ENCODE measurements at regions of chr17 and their contacts with region 1.

Region 1: GRCh38 chr17:8300627-8301242 is 5.5 kb upstream of the SLC25A35 start:
- DNase-seq: peak; percentile 87 to 94
- ATAC-seq: peak; percentile 95 to 99
- H3K4me3 ChIP-seq: no peak overlapping the region
- H3K27ac ChIP-seq: 0 out of 6 replicates have a peak overlapping the region, but pooled peaks of 1 of the 2 experiments have one; percentile 18
- H3K4me1 ChIP-seq: no peaks in the 10 kb centered on the region
- CTCF ChIP-seq: peak; percentile 94
- EP300 ChIP-seq: no peak
- POLR2A ChIP-seq: no peak
- RAD21 ChIP-seq: peak; percentile 92 to 98

Region 2: DNA sequence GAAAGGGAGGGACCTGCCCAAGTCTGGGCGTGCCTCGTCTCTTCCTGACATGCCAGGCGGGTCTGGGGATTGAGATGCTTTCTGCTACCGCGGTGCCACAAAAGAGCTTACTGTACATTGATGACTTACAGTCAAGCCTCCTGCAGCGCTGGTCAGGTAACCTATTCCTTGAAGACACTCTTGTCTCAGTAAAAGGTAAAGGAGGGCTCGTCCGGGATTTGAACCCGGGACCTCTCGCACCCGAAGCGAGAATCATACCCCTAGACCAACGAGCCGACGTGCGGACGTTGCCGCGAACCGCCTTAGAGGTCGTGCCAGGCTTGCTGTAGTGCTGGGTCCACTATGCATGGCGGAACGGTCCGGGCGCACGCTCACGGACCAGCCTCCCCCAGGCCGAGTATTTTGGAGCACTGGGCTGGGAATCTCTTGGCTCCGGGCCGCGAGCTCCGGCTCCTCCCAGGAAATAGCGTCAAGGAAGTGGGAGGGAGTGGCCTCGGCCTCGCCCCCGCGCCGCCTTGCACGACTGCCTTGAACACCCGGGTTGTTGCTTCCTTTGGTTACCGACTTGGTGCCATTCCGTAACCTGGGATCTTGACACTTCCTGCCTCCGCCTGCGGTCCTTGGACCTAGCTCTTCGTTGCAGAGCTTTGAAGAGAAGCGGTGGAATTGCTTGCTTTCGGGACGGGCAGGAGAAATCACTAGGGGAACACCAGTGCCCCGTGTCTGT is 77.9 kb before region 1 on chr17:
- CTCF ChIA-PET with region 1: interaction called, 29 read pairs
- POLR2A ChIA-PET with region 1: interaction called, 44 read pairs
- DNase-seq: peak; percentile 85 to 98
- ATAC-seq: peak; percentile 38 to 64
- H3K4me3 ChIP-seq: peak overlapping the region; percentile 78
- H3K27ac ChIP-seq: peak overlapping the region; percentile 95 to 97
- H3K4me1 ChIP-seq: peaks cover 32% of the 10 kb centered on the region
- CTCF ChIP-seq: no peak
- EP300 ChIP-seq: no peak
- POLR2A ChIP-seq: peak; percentile 85
- RAD21 ChIP-seq: no peak

Region 3: DNA sequence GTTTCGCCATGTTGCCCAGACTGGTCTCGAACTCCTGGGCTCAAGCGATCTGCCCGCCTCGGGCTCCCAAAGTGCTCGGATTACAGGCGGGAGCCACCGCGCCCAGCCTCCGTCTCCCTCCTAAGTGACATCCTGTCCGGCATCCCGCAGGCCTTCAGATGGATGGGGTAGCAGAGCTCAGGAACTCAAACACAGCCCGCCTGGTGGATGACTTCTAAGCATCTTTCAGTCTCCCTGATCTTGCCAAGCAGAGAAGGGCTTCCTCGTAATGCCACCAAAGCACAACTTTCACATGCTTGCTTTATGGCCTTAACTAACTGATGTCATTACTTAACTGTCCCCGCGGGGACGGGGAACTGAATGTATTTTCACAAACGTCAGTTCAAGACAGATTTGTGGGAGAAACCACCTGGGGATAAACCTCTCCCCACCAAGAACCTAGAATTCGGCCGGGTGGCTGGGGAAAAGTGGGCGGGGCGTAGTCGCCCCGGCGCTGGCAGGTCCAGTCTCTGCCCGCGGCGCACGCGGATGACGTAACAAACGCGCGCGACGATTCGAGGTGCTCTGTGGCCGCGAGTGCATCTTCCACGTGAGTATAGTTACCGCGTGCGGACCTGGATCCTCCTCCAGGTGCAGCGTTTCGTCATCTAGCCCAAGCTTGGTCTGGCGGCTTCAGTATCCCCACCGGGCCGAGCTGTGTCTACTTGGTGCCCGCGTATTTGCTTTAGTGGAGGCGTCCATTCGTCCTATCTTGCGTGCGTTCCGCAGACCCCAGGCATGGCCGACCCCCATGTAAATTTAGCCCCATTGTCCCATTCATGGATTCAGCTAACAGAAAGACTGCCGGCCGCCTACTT is 51.8 kb before region 1 on chr17 and contains the start of gene PFAS:
- CTCF ChIA-PET with region 1: interaction called, 18 read pairs
- POLR2A ChIA-PET with region 1: interaction called, 70 read pairs
- DNase-seq: peak; percentile 97
- ATAC-seq: peak; percentile 62 to 69
- H3K4me3 ChIP-seq: peak within 1 kb of the TSS; percentile 74
- H3K27ac ChIP-seq: peak within 1 kb of the TSS; percentile 97 to 99
- H3K4me1 ChIP-seq: peaks cover 8% of the 10 kb centered on the region
- CTCF ChIP-seq: no peak
- EP300 ChIP-seq: no peak
- POLR2A ChIP-seq: peak; percentile 91
- RAD21 ChIP-seq: no peak
- polyA plus RNA-seq, gene PFAS: 51.9 and 64.5 TPM in 2 replicates

Region 4: DNA sequence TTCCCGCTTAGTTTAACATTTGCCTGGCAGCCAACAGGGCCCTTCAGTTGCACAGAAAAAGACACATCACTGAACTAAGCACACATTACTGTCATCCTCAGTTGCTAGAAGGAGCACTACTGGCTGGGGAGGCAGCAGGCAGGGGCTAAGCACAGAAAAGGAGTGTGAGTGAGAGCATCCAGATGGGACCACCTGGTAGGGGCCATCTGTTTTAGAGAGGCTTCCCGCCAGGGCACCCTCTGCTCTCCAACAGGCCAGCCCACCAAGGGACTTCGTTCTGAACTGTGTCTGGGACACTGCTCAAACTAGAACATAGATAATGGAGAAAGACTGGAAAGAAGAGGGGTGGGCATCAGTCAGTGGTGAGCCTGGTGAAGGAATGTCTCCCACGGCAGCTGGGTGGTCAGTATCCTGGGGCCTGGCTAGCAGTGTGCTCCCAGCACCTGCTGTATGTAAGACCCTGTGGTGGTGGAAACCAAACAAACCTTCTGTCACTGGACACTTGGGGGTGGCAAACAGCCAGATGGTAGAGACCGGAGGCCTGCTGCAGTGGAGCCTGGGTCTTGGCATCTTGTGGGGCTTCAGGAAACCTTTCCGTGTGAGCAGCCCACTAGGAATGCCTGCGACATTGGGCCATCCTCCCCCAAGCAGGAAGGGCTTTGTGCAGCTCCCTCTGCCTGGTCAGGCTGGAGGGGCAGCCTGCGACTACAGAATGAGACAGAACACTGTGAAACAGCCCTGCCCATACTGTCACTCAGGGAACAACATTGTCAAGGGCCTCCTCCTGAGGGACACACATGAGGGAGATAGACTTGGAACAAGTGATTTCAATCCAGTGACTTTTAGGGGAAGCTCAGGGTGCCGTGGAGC is 25.1 kb before region 1 on chr17:
- CTCF ChIA-PET with region 1: interaction called, 11 read pairs
- POLR2A ChIA-PET with region 1: interaction called, 6 read pairs
- DNase-seq: no peak
- ATAC-seq: peak in 1 of 2 experiments; percentile 28; a peak in 2 of 6 replicates
- H3K4me3 ChIP-seq: no peak overlapping the region
- H3K27ac ChIP-seq: no peak overlapping the region
- H3K4me1 ChIP-seq: no peaks in the 10 kb centered on the region
- CTCF ChIP-seq: no peak
- EP300 ChIP-seq: no peak
- POLR2A ChIP-seq: no peak
- RAD21 ChIP-seq: no peak

Region 5: GRCh38 chr17:8326511-8327302 is 26.0 kb after region 1 on chr17:
- CTCF ChIA-PET with region 1: interaction called, 33 read pairs
- POLR2A ChIA-PET with region 1: interaction called, 4 read pairs
- DNase-seq: no peak
- ATAC-seq: peak; percentile 10 to 54; a peak in 3 of 6 replicates
- H3K4me3 ChIP-seq: no peak overlapping the region
- H3K27ac ChIP-seq: no peak overlapping the region
- H3K4me1 ChIP-seq: no peaks in the 10 kb centered on the region
- CTCF ChIP-seq: no peak
- EP300 ChIP-seq: no peak
- POLR2A ChIP-seq: no peak
- RAD21 ChIP-seq: no peak

Region 6: GRCh38 chr17:8354236-8354635 is 53.5 kb after region 1 on chr17:
- CTCF ChIA-PET with region 1: no interaction called
- POLR2A ChIA-PET with region 1: no interaction called
- DNase-seq: no peak
- ATAC-seq: no peak
- H3K4me3 ChIP-seq: no peak overlapping the region
- H3K27ac ChIP-seq: no peak overlapping the region
- H3K4me1 ChIP-seq: no peaks in the 10 kb centered on the region
- CTCF ChIP-seq: no peak
- EP300 ChIP-seq: no peak
- POLR2A ChIP-seq: no peak
- RAD21 ChIP-seq: no peak